ENCODE measurements at regions of chr6 and their contacts with region 1.

Region 1: DNA sequence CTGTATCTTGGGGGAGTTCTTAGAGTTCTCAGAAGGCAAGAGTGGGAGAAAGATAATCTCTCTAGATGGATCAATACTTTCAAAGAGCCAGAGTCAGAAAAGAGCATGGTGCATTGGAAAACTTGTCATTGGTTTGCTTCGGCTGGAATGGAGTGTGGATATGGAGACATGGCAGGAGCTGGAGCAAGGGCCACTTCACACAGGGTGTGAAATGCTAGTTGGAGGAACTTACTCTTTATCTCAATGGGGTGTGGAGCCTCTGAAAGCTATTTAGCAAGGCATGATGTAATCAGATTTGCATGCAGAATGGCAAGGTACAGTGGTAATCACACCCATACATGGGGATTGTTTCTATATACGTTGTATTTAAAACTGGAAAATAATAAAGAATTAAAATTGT is 31.5 kb upstream of the PAQR8 start:
- DNase-seq: no peak
- ATAC-seq: peak; percentile 55
- H3K4me3 ChIP-seq: no peak overlapping the region
- H3K27ac ChIP-seq: no peak overlapping the region
- H3K4me1 ChIP-seq: peaks cover 3% of the 10 kb centered on the region
- H3K27me3 ChIP-seq: no peaks in the 10 kb centered on the region
- CTCF ChIP-seq: no peak
- EP300 ChIP-seq: no peak
- POLR2A ChIP-seq: no peak
- RAD21 ChIP-seq: no peak

Region 2: DNA sequence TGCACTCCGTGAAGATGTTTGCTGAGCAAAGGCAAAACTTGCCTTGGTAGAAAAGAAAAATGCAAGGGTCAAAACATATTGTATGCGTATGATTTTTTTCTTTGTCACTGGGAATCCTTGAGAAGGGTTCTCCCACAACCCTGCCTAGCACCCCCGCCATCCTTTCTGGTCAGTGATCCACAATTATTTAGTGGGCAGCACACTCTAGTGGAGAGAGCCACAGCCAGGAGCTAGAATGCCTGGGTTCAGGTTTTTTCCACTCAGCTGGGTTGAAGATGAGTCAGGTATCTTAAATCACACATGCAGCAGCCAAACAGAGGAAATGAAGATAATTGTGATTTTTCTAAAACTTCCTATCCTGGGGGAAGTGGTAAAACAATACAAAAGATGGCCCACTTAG is 486.1 kb before region 1 on chr6:
- CTCF ChIA-PET with region 1: no interaction called
- POLR2A ChIA-PET with region 1: no interaction called
- RAD21 ChIA-PET with region 1: no interaction called
- SMC1A ChIA-PET with region 1: no interaction called
- in situ Hi-C with region 1: no loop called
- intact Hi-C with region 1: no loop called
- DNase-seq: no peak
- ATAC-seq: no peak
- H3K4me3 ChIP-seq: no peak overlapping the region
- H3K27ac ChIP-seq: no peak overlapping the region
- H3K4me1 ChIP-seq: no peaks in the 10 kb centered on the region
- H3K27me3 ChIP-seq: peaks cover 0 to 2% of the 10 kb centered on the region in 2 experiments; a peak in 2 of 4 replicates
- CTCF ChIP-seq: no peak; a peak in 1 of 6 replicates
- EP300 ChIP-seq: no peak
- POLR2A ChIP-seq: no peak
- RAD21 ChIP-seq: peak; percentile 42; the same call in 1 of the 2 replicates

Region 3: GRCh38 chr6:52317841-52318581 is 12.5 kb before region 1 on chr6:
- CTCF ChIA-PET with region 1: interaction called, 3 read pairs
- POLR2A ChIA-PET with region 1: interaction called, 3 read pairs
- RAD21 ChIA-PET with region 1: interaction called, 3 read pairs
- SMC1A ChIA-PET with region 1: interaction called, 16 read pairs
- in situ Hi-C with region 1: no loop called
- intact Hi-C with region 1: no loop called
- DNase-seq: peak; percentile 62
- ATAC-seq: peak; percentile 99
- H3K4me3 ChIP-seq: no peak overlapping the region
- H3K27ac ChIP-seq: no peak overlapping the region
- H3K4me1 ChIP-seq: peaks cover 15% of the 10 kb centered on the region
- H3K27me3 ChIP-seq: no peaks in the 10 kb centered on the region
- CTCF ChIP-seq: no peak
- EP300 ChIP-seq: no peak; a peak in 1 of 4 replicates
- POLR2A ChIP-seq: no peak
- RAD21 ChIP-seq: 0 out of 2 replicates have a peak, but pooled peaks have one; percentile 11

Region 4: GRCh38 chr6:52371656-52372191 is 41.3 kb after region 1 on chr6:
- CTCF ChIA-PET with region 1: no interaction called
- POLR2A ChIA-PET with region 1: no interaction called
- RAD21 ChIA-PET with region 1: no interaction called
- SMC1A ChIA-PET with region 1: no interaction called
- in situ Hi-C with region 1: no loop called
- intact Hi-C with region 1: no loop called
- DNase-seq: no peak
- ATAC-seq: no peak
- H3K4me3 ChIP-seq: no peak overlapping the region
- H3K27ac ChIP-seq: no peak overlapping the region
- H3K4me1 ChIP-seq: peaks cover 11% of the 10 kb centered on the region
- H3K27me3 ChIP-seq: no peaks in the 10 kb centered on the region
- CTCF ChIP-seq: no peak
- EP300 ChIP-seq: no peak
- POLR2A ChIP-seq: no peak
- RAD21 ChIP-seq: no peak